ENCODE measurements at regions of chr11 and their contacts with region 1.

Region 1: GRCh38 chr11:110296226-110297075 is at the start of gene RDX:
- DNase-seq: peak; percentile 87
- ATAC-seq: peak; percentile 95
- total RNA-seq, gene RDX: 116 TPM

Region 2: GRCh38 chr11:110249051-110249450 is 47.4 kb before region 1 on chr11:
- intact Hi-C with region 1: loop called (anchors 10 kb)
- DNase-seq: no peak
- ATAC-seq: no peak

Region 3: DNA sequence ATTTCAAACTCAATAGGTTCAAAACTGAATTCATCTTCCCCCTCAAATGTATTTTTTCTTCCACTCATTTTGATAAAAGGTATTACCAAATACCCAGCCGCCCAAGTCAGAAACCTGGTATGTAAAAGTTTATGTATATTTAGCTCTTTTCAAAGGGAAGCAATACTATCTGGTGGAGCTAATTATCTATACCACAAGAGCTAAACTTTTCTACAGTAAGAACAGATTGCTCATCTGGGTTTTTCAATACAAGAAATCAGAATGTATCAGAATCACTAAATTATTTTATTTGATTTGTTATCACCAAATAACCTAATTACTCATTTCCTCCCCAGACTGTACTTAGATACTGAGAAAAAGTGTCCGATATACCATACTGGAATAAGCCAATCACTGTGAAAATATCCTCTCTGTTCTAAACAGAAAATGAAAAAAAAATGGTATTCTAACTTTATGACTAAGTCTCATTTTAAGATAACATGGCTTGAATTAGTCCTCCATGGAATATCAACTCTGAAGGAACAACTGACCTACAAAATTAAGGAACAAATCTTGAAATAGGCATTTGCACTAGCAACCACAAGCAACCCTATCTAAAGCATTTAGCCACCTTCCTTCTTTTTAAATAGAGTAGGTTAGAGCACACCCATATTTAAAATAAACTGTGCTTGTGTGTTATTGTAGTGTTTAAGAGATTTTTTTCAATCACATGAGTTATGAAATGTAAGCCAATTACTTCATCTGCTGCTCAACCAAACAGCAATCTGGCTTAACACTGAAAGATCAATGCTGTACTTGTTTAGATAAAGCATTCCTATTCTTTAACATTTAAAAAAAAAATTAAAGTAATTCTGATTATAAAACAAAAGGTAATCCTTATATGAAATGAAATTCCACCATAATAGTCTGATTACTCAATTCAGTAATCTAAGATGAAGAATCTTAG is 35.0 kb before region 1 on chr11:
- intact Hi-C with region 1: no loop called
- DNase-seq: no peak
- ATAC-seq: no peak

Region 4: DNA sequence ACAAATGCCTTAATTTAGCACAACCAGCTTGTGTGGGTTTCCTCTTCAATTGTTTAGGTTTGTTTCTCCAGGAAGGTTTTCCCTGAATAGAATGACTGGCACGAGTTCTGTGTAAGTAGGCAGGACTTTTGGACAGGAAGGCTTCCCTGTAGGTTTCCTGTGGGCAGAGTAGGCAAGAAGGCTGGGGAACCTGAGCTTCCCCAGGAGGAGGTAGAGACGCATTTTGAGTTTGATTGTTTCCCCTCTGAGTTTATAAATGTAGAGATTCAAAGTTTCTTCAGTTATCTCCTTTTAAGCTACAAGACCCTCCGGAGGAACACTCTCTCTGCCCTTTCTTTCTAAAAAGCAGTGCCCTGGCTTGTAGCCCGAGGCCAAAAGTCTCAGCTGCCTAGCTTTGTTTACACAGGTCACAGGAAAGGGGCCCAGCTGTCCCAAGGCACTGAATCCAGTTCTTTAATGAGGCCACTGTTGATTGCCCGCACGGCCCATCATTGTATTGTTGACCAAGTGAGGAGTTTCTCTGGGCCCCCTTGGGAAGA is 66.6 kb after region 1 on chr11:
- intact Hi-C with region 1: loop called (anchors 5 kb)
- DNase-seq: no peak
- ATAC-seq: no peak

Region 5: GRCh38 chr11:110429731-110430266 is 133.3 kb after region 1 on chr11 and contains the start of gene FDX1:
- intact Hi-C with region 1: loop called (anchors 10 kb)
- DNase-seq: peak; percentile 92
- ATAC-seq: peak; percentile 92
- total RNA-seq, gene FDX1: 22.5 TPM